ENCODE measurements at regions of chr6 and their contacts with region 1.

Region 1: GRCh38 chr6:40620574-40621435 is 33.6 kb upstream of the LRFN2 start:
- DNase-seq: no peak
- ATAC-seq: no peak
- H3K4me3 ChIP-seq: no peak overlapping the region
- H3K4me3 Mint-ChIP-seq: no peak overlapping the region
- H3K27ac ChIP-seq: no peak overlapping the region
- H3K27ac Mint-ChIP-seq: no peak overlapping the region
- H3K4me1 ChIP-seq: no peaks in the 10 kb centered on the region
- H3K4me1 Mint-ChIP-seq: no peaks in the 10 kb centered on the region
- H3K27me3 ChIP-seq: peaks cover 2 to 16% of the 10 kb centered on the region in 2 experiments
- H3K27me3 Mint-ChIP-seq: peaks cover 22 to 24% of the 10 kb centered on the region in 2 donors

Region 2: DNA sequence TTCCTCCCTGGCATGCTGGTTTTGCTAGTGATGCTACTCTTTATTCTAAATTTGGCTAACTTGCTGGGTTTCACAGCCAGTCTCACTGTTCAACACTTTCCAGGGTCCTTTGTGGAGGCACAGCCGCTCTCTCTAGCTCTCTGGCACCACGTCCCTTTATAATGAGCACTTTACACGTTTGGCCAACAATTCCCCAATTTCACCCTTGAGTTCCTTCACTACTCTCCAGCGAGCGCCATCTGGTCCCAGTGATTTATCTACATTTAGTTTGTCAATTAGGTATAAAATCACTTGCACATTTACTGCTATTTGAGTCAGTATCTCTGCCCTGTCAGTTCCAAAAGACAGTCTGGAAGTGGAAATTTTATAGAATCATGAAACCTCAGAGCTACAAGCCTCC is 444.7 kb before region 1 on chr6:
- CTCF ChIA-PET with region 1: interaction called in 1 of 2 experiments, 11 read pairs
- POLR2A ChIA-PET with region 1: no interaction called
- DNase-seq: no peak
- ATAC-seq: no peak
- H3K4me3 ChIP-seq: no peak overlapping the region
- H3K4me3 Mint-ChIP-seq: no peak overlapping the region
- H3K27ac ChIP-seq: no peak overlapping the region
- H3K27ac Mint-ChIP-seq: no peak overlapping the region
- H3K4me1 ChIP-seq: no peaks in the 10 kb centered on the region
- H3K4me1 Mint-ChIP-seq: no peaks in the 10 kb centered on the region
- H3K27me3 ChIP-seq: no peaks in the 10 kb centered on the region
- H3K27me3 Mint-ChIP-seq: peaks cover 21 to 28% of the 10 kb centered on the region in 2 donors

Region 3: DNA sequence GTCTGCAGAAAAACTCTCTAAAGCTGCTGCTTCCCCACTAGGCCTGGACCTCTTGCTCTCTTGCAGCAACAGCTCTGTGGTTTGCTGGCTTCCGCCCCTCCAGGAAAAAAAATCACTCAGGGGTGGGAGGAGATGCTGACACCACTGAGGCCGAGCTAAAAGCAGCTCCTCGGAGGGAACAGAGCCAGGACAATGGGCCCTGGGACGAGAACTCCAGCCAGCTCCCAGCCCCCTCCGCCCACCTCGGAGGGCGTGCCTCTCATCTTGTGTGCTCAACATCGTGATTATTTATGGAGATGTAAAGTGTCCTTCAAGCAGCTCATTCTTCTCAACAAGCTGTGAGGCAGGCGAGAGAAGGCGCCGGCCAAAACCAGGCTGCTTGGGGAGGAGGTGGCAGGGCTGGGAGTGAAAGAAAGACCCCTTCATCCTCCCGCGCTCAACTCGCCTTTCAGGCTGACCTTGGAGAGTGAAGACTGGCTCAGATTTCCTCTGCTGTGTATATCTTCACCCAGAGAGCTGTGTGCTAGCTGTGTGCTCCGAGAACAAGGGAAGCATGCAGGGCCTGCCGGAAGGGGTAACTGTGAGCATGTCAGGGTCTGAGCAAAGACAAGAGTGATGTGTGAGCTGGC is 19.9 kb after region 1 on chr6:
- CTCF ChIA-PET with region 1: no interaction called
- POLR2A ChIA-PET with region 1: no interaction called
- DNase-seq: peak in 28 of 35 experiments; percentile 3 to 45 (median 14)
- ATAC-seq: peak; percentile 52 to 85 (median 69)
- H3K4me3 ChIP-seq: peak overlapping the region in 1 of 2 donors; percentile 10
- H3K4me3 Mint-ChIP-seq: peak overlapping the region; percentile 25 to 74 (median 50)
- H3K27ac ChIP-seq: peak overlapping the region; percentile 20
- H3K27ac Mint-ChIP-seq: peak overlapping the region; percentile 70 to 83
- H3K4me1 ChIP-seq: peaks cover 5 to 15% of the 10 kb centered on the region in 2 experiments
- H3K4me1 Mint-ChIP-seq: peaks cover 20 to 25% (median 24%) of the 10 kb centered on the region in 3 donors
- H3K27me3 ChIP-seq: peaks cover 0 to 5% of the 10 kb centered on the region in 2 experiments
- H3K27me3 Mint-ChIP-seq: peaks cover 2 to 13% of the 10 kb centered on the region in 2 donors

Region 4: GRCh38 chr6:40762981-40763380 is 142.2 kb after region 1 on chr6:
- CTCF ChIA-PET with region 1: no interaction called
- POLR2A ChIA-PET with region 1: no interaction called
- DNase-seq: no peak
- ATAC-seq: no peak
- H3K4me3 ChIP-seq: no peak overlapping the region
- H3K4me3 Mint-ChIP-seq: no peak overlapping the region
- H3K27ac ChIP-seq: no peak overlapping the region
- H3K27ac Mint-ChIP-seq: no peak overlapping the region
- H3K4me1 ChIP-seq: no peaks in the 10 kb centered on the region
- H3K4me1 Mint-ChIP-seq: no peaks in the 10 kb centered on the region
- H3K27me3 ChIP-seq: peaks cover 0 to 12% of the 10 kb centered on the region in 2 experiments
- H3K27me3 Mint-ChIP-seq: peaks cover 10 to 11% of the 10 kb centered on the region in 2 donors

Measured in T-cell (primary cell).